K562 (cell line): ENCODE measurements at regions of chr10 and their contacts with region 1.

Region 1: DNA sequence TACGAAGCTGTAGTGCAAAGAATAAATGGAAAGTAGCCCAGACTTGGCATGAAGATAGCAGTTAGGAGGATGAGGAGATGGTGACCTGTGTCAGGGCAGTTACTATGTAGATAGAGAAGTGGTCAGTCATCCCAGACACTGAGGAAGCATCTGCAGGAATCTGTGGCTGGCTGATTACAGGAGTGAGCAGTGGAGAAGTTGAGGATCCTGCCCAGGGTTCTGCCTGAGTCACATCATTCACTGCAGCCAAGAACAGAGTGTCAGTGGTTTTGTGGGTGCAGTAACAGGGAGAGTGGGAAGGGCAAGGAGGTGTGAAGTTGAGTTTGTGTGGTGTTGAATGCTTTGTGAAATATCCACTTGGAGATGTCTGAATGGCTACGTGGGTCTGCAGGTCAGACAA is 676.4 kb upstream of the NRP1 start:
- DNase-seq: no peak
- ATAC-seq: no peak
- H3K4me3 ChIP-seq: no peak overlapping the region
- H3K27ac ChIP-seq: no peak overlapping the region
- H3K4me1 ChIP-seq: no peaks in the 10 kb centered on the region
- H3K27me3 ChIP-seq: no peaks in the 10 kb centered on the region
- CTCF ChIP-seq: no peak
- EP300 ChIP-seq: no peak
- POLR2A ChIP-seq: no peak
- RAD21 ChIP-seq: no peak

Region 2: DNA sequence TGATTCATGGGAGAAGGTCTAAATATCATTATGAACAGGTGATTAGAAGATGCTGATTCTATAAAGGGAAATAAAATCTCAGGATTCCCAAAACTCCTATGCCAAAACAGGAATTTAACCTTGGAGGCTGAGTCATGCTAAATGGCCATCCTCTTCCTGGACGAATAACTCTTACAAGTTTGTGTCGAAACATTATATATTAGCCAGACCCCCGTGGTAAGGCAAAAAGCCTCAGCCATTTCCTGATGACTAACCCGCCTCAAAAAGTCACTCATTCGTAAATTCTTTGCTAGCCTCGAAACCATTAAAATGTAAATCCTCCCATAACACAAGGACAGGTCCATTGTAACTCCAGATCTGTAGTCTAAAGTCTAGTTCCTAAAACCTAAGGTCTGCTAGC is 1047.2 kb after region 1 on chr10:
- CTCF ChIA-PET with region 1: no interaction called
- POLR2A ChIA-PET with region 1: no interaction called
- in situ Hi-C with region 1: loop called (anchors 10 kb)
- intact Hi-C with region 1: no loop called
- DNase-seq: no peak
- ATAC-seq: no peak
- H3K4me3 ChIP-seq: no peak overlapping the region
- H3K27ac ChIP-seq: no peak overlapping the region
- H3K4me1 ChIP-seq: peaks cover 0 to under 1% of the 10 kb centered on the region in 2 experiments; a peak in 3 of 5 replicates
- H3K27me3 ChIP-seq: no peaks in the 10 kb centered on the region
- CTCF ChIP-seq: no peak
- EP300 ChIP-seq: no peak
- POLR2A ChIP-seq: no peak
- RAD21 ChIP-seq: no peak